ENCODE measurements at regions of chr6 and their contacts with region 1.

Region 1: DNA sequence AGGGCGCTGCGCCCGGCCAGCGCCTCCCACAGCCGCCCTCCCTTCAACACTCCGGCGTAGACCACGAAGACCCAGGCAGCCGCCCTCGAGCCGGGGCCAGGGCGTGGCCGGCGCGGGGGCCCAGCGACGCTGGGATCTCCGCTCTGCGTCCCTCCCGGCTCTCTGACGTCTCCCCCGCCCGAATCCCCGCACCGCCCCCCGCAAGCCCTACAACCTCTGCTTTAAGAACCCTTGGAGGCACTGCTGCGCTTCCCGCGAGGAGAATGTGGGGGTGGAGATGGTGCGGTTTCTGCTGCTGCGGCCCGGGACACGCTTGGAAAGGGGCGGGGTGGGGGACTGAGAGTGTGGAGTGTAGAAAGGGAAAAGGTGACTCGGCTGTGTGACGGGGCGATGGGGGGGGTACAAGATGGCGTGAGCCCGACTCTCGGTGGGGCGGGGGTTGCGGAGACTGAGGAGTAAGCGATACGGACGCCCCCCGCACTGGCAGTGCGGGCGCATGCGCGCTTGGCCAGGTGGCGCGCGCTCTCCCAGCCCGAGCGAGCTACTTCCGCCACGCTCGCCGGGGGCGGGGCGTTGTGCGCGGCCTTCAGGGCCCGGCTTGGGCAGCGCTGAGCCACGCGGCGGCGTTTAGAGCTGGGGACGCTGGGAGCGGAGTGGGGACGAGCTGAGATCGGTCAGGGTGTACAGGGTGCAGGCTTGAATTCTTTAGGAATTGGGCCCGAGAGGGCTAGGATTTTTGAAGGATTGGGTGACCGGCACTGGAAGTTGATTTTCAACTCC is at the start of gene SUPT3H:
- DNase-seq: peak; percentile 97
- H3K4me3 Mint-ChIP-seq: peak within 1 kb of the TSS; percentile 99
- H3K27ac Mint-ChIP-seq: peak within 1 kb of the TSS; percentile 100
- H3K4me1 Mint-ChIP-seq: peaks cover 25% of the 10 kb centered on the region
- H3K27me3 Mint-ChIP-seq: no peaks in the 10 kb centered on the region
- total RNA-seq, gene SUPT3H: 12.4 and 13.0 TPM in 2 replicates

Region 2: DNA sequence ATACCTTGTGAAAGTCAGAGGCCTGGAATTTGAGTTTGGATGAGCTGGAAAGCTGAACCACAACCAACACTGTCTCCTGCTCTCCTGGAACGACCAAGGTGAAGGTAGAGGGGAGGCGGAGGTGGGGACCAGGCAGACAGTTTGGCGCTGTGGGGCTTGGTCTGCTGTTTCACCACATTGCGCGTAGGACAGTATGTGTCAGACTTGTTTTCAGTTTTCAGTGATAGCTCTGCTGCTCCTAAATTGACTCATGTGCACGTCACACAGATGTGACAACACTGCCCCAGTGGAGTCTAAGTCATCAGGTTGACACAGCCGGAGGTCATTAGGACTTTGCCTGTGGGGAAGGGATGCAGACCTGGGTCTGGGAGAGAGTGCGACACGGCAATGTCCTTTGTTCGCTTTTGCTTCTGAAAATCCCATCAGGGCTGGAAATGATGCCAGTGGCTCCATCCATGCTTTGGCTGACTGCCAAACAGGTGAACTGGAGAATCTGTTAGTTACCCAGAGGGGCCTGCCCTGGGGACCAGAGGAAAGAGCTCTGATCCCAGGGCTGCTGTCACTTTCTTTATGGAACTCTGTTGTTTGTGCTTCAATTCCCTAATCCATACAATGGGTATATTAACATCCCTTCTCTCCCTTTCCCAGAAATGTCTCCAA is 734.7 kb before region 1 on chr6:
- intact Hi-C with region 1: loop called (anchors 5 kb)
- DNase-seq: peak; percentile 74
- H3K4me3 Mint-ChIP-seq: peak overlapping the region; percentile 7
- H3K27ac Mint-ChIP-seq: peak overlapping the region; percentile 84
- H3K4me1 Mint-ChIP-seq: peaks cover 17% of the 10 kb centered on the region
- H3K27me3 Mint-ChIP-seq: no peaks in the 10 kb centered on the region

Region 3: DNA sequence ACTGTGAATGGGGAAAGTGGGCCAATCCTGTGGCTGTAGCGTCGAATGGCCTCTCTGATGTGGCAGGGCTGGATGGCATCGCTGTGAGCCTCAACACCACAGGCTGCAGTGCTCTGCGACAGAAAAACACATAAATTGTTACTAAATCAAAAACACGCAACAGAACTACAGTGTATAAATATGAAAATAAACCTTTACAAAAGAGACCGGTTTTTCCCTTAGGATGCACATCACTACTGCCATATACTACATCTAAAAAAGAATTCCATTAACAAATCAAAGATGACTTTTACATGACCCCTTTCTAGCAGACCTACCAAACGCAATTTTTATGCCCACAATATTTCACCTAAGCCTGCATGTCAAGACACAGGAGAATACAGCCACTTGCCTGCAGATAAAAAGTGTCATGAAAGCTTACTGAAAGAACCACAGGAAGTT is 445.1 kb before region 1 on chr6:
- intact Hi-C with region 1: loop called (anchors 2 kb)
- DNase-seq: peak; percentile 80
- H3K4me3 Mint-ChIP-seq: peak overlapping the region; percentile 89
- H3K27ac Mint-ChIP-seq: peak overlapping the region; percentile 96
- H3K4me1 Mint-ChIP-seq: peaks cover 42% of the 10 kb centered on the region
- H3K27me3 Mint-ChIP-seq: no peaks in the 10 kb centered on the region

Region 4: GRCh38 chr6:45049188-45049843 is 328.4 kb before region 1 on chr6:
- intact Hi-C with region 1: no loop called
- DNase-seq: no peak
- H3K4me3 Mint-ChIP-seq: peak overlapping the region; percentile 36
- H3K27ac Mint-ChIP-seq: peak overlapping the region; percentile 66
- H3K4me1 Mint-ChIP-seq: peaks cover 27% of the 10 kb centered on the region
- H3K27me3 Mint-ChIP-seq: no peaks in the 10 kb centered on the region

Region 5: DNA sequence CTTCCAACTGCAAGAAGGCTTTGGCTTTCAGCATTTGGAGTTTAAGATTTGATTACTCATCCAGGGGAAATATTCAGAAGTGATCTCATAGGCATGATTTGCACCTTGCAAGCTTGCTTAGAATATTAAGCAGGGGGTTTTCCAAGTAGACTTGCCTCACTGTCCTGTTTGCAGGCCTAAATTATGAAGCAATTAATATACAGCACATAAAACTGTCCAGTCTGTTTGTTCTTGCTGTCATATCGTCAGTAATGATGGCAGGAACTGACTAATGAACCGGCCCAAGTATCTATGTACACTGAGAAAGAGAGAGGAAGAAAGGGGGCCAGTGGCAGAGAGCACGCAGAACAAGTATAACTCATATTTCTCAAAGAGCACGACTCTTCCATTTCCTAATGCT is 212.5 kb after region 1 on chr6:
- intact Hi-C with region 1: loop called (anchors 2 kb)
- DNase-seq: peak; percentile 54
- H3K4me3 Mint-ChIP-seq: no peak overlapping the region
- H3K27ac Mint-ChIP-seq: peak overlapping the region; percentile 57
- H3K4me1 Mint-ChIP-seq: peaks cover 75% of the 10 kb centered on the region
- H3K27me3 Mint-ChIP-seq: no peaks in the 10 kb centered on the region

Region 6: GRCh38 chr6:45737331-45738056 is 359.8 kb after region 1 on chr6:
- intact Hi-C with region 1: loop called (anchors 2 kb)
- DNase-seq: peak; percentile 82
- H3K4me3 Mint-ChIP-seq: peak overlapping the region; percentile 68
- H3K27ac Mint-ChIP-seq: peak overlapping the region; percentile 85
- H3K4me1 Mint-ChIP-seq: peaks cover 53% of the 10 kb centered on the region
- H3K27me3 Mint-ChIP-seq: peaks cover 3% of the 10 kb centered on the region

Measured in activated CD4-positive, alpha-beta T cell treated with anti-CD3 and anti-CD28 coated beads, Interleukin-2, amount 10 ng/mL, durations not matched to agents 24 days and 14 days (primary cell).